Panc1 (cell line): ENCODE measurements at regions of chr3 and their contacts with region 1.

Region 1: DNA sequence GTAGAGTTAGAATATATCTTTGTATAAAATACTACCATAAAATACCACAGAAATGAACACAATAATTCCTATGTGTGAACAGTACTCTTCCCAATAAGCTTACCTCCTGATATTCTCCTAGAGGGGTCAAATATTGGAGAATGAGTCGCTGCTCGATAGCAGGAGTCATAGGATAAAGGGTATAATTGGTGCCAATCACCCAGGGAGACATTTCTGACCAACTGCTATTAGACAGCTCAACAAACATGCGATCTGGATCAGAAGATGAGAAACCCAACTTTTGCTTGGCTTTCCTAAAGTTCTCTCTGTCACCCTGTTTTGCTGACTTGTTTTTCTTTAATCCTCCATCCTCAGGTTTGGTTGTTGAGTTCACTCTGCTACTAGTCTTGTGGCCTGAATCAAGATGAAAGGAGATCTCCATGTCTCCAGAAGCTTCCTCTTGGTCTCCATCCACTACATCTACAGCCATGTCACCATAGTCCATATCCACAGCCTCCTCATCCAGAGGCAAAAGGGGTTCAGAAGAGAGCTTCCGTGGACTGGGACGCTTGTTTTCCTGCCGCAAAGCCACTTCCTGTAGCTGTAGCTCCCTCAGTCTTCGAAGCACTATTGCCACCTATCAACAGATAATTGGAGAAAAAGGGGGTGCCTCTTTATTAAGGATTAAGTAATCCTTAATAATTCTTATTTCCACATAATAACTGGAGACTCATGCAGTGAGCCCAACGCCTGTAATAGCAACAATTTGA is 50.4 kb downstream of the RBM15B start:
- DNase-seq: no peak
- ATAC-seq: no peak
- H3K4me3 ChIP-seq: no peak overlapping the region
- H3K27ac ChIP-seq: no peak overlapping the region
- H3K4me1 ChIP-seq: no peaks in the 10 kb centered on the region
- H3K27me3 ChIP-seq: no peaks in the 10 kb centered on the region
- CTCF ChIP-seq: no peak

Region 2: DNA sequence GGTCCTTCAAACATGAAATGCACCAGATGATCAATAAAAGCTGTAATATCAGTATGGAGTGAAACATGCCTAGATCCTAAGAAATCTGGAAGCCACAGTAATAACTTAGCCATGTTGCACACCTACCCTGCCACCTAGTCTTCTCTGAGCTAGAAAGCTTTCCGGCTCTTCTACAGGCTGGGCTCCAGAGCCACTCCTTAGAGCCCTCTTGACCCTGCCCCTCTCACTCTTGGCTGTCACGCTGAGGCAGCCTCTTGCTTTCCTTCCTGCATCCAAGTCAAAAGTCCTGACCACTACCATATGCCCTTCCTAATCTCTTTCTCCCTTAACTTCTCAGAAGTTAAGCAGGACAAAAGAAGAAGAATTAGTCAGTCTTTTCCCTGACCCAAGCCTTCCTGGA is 32.6 kb before region 1 on chr3:
- CTCF ChIA-PET with region 1: no interaction called
- POLR2A ChIA-PET with region 1: no interaction called
- in situ Hi-C with region 1: no loop called
- intact Hi-C with region 1: no loop called
- DNase-seq: no peak
- ATAC-seq: no peak
- H3K4me3 ChIP-seq: no peak overlapping the region
- H3K27ac ChIP-seq: no peak overlapping the region
- H3K4me1 ChIP-seq: no peaks in the 10 kb centered on the region
- H3K27me3 ChIP-seq: no peaks in the 10 kb centered on the region
- CTCF ChIP-seq: no peak

Region 3: GRCh38 chr3:51429138-51429537 is 12.3 kb before region 1 on chr3:
- CTCF ChIA-PET with region 1: no interaction called
- POLR2A ChIA-PET with region 1: interaction called, 11 read pairs
- in situ Hi-C with region 1: no loop called
- intact Hi-C with region 1: no loop called
- DNase-seq: no peak
- ATAC-seq: no peak
- H3K4me3 ChIP-seq: no peak overlapping the region
- H3K27ac ChIP-seq: no peak overlapping the region
- H3K4me1 ChIP-seq: no peaks in the 10 kb centered on the region
- H3K27me3 ChIP-seq: no peaks in the 10 kb centered on the region
- CTCF ChIP-seq: no peak